HAP-1 (cell line): ENCODE measurements at regions of chr1 and their contacts with region 1.

Region 1: GRCh38 chr1:30407865-30408580 is 315.4 kb downstream of the MATN1 start:
- DNase-seq: no peak
- H3K4me3 ChIP-seq: no peak overlapping the region
- H3K4me1 ChIP-seq: no peaks in the 10 kb centered on the region
- H3K27me3 ChIP-seq: no peaks in the 10 kb centered on the region

Region 2: GRCh38 chr1:29394521-29395225 is 1013.4 kb before region 1 on chr1:
- in situ Hi-C with region 1: loop called (anchors 5 kb)
- DNase-seq: no peak
- H3K4me3 ChIP-seq: no peak overlapping the region
- H3K4me1 ChIP-seq: no peaks in the 10 kb centered on the region
- H3K27me3 ChIP-seq: no peaks in the 10 kb centered on the region

Region 3: GRCh38 chr1:30718636-30719405 is 310.8 kb after region 1 on chr1:
- in situ Hi-C with region 1: no loop called
- DNase-seq: peak; percentile 88 to 89
- H3K4me3 ChIP-seq: peak overlapping the region; percentile 49
- H3K4me1 ChIP-seq: 0 out of 2 replicates have a peak, but pooled peaks cover 2% of the 10 kb centered on the region
- H3K27me3 ChIP-seq: no peaks in the 10 kb centered on the region

Region 4: GRCh38 chr1:30888391-30888790 is 480.4 kb after region 1 on chr1:
- in situ Hi-C with region 1: no loop called
- DNase-seq: no peak
- H3K4me3 ChIP-seq: no peak overlapping the region
- H3K4me1 ChIP-seq: no peaks in the 10 kb centered on the region; the same call in 1 of the 2 replicates
- H3K27me3 ChIP-seq: no peaks in the 10 kb centered on the region

Region 5: DNA sequence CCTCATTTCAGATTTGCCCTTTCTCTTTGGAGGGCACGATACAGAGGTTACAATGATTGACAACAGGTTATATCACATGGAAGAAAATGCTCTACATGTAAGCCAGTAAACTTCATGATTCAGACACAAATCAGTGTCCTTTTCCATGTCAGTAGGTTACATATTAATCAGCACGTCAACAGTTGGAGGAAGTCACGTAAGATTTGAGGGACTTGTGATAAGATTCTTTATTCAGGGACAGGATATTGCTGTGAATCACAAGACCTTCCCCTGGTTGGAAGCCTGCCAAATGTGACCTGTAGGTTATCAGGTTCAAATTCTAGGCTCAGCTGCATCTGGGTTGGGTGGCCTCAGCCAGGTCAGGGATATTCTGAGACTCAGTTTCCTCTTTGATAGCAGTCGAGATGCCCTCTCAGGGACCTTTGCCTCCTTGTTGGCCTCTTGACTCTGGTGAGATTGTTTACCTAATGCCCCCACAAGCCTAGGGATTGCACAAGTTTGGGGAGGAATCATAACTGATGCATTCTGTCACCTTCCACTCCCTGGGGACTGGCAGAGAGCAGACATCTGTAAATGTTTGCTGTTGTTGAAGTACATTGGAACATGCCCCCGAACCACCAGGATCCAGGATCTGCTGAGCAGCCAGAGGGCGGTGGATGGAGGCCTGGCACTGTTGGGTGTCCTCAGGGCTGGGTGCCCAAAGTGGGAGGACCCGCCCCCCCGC is 1036.9 kb after region 1 on chr1:
- in situ Hi-C with region 1: no loop called
- DNase-seq: no peak
- H3K4me3 ChIP-seq: no peak overlapping the region
- H3K4me1 ChIP-seq: no peaks in the 10 kb centered on the region
- H3K27me3 ChIP-seq: no peaks in the 10 kb centered on the region